Activated CD4-positive, alpha-beta T cell treated with anti-CD3 and anti-CD28 coated beads, Interleukin-2, amount 10 ng/mL, durations not matched to agents 24 days and 14 days (primary cell): ENCODE measurements at regions of chr10 and their contacts with region 1.

Region 1: GRCh38 chr10:7687228-7687907 is 15.7 kb upstream of the ITIH2 start:
- DNase-seq: peak; percentile 93
- H3K4me3 Mint-ChIP-seq: no peak overlapping the region
- H3K27ac Mint-ChIP-seq: no peak overlapping the region
- H3K4me1 Mint-ChIP-seq: peaks cover 10% of the 10 kb centered on the region
- H3K27me3 Mint-ChIP-seq: peaks cover 15% of the 10 kb centered on the region

Region 2: DNA sequence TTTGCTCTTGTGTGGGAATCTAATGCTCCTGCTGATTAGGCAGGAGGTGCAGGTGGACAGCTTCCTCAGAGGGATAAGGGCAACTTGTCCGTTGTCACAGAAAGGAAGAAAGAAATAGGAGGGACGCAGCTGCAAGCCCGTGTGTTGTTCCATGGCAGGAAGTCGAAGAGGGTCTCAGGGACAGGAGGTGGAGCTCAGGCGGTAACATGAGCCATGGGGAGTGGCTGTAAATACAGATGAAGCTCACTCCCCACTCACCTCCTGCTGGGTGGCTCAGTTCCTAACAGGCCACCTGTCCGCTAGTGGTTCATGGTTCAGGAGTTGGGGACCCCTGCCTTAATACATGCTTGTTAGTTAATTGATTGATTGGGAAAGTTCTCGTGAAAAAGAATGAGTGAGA is 174.9 kb before region 1 on chr10:
- intact Hi-C with region 1: no loop called
- DNase-seq: no peak
- H3K4me3 Mint-ChIP-seq: no peak overlapping the region
- H3K27ac Mint-ChIP-seq: no peak overlapping the region
- H3K4me1 Mint-ChIP-seq: peaks cover 28% of the 10 kb centered on the region
- H3K27me3 Mint-ChIP-seq: peaks cover 6% of the 10 kb centered on the region

Region 3: GRCh38 chr10:7525314-7526016 is 161.9 kb before region 1 on chr10:
- intact Hi-C with region 1: loop called (anchors 1 kb)
- DNase-seq: peak; percentile 91
- H3K4me3 Mint-ChIP-seq: no peak overlapping the region
- H3K27ac Mint-ChIP-seq: no peak overlapping the region
- H3K4me1 Mint-ChIP-seq: peaks cover 20% of the 10 kb centered on the region
- H3K27me3 Mint-ChIP-seq: peaks cover 18% of the 10 kb centered on the region

Region 4: DNA sequence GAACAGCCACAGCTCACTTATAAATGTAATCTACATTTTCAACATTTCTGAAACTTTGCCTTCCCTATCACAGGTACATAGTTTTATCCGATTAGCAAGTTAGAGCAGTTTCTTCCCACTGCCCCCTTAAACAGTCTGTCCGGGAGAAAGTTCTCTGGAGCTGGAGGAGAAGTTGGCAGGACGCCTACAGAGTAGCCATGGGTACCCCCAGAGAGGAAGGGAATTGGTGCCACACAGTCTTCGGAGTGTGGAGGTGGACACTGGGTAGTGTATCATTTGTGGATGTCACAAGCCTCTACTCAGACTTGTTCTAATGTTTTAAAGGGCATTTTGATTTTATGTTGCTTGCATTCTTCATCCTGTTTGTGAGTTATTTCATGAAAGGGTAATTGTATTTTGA is 169.9 kb after region 1 on chr10:
- intact Hi-C with region 1: no loop called
- DNase-seq: peak; percentile 37
- H3K4me3 Mint-ChIP-seq: no peak overlapping the region
- H3K27ac Mint-ChIP-seq: no peak overlapping the region
- H3K4me1 Mint-ChIP-seq: no peaks in the 10 kb centered on the region
- H3K27me3 Mint-ChIP-seq: no peaks in the 10 kb centered on the region